Activated B cell treated with CpG ODN at 0.5 μM for 24 hours (primary cell): ENCODE measurements at regions of chr3 and their contacts with region 1.

Region 1: DNA sequence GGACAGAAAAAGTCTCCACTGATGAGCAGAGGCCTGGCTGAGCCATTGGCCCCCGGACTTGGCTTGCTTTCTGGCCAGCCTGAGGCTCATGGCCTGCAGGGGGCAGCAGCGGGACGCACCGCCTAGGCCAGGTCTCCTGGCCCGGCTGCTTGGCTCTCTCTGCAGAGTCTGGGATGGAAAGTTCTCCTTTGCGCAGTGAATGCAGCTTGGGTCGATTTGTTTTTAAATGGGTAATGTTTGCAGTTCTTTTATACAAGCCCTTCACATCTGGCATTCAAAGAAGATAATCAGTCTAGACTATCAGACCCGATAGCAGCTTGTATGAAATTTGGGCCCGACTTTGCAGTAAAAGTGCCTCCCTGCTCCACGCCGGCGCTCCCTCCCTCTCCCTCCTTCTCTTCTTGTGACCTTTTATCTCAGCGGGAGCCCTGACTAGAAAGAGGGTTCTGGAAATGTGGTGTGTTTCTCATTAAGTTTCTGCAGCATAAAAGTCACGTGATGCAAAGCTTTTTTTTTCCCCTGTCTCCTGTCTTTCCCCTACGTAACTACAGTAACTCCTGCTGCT is 59.9 kb downstream of the ZNF621 start:
- DNase-seq: peak; percentile 78
- ATAC-seq: peak; percentile 86
- H3K4me3 Mint-ChIP-seq: no peak overlapping the region
- H3K27ac Mint-ChIP-seq: no peak overlapping the region
- H3K4me1 Mint-ChIP-seq: peaks cover 5% of the 10 kb centered on the region
- H3K27me3 Mint-ChIP-seq: peaks cover 15% of the 10 kb centered on the region
- CTCF ChIP-seq: peak; percentile 91

Region 2: DNA sequence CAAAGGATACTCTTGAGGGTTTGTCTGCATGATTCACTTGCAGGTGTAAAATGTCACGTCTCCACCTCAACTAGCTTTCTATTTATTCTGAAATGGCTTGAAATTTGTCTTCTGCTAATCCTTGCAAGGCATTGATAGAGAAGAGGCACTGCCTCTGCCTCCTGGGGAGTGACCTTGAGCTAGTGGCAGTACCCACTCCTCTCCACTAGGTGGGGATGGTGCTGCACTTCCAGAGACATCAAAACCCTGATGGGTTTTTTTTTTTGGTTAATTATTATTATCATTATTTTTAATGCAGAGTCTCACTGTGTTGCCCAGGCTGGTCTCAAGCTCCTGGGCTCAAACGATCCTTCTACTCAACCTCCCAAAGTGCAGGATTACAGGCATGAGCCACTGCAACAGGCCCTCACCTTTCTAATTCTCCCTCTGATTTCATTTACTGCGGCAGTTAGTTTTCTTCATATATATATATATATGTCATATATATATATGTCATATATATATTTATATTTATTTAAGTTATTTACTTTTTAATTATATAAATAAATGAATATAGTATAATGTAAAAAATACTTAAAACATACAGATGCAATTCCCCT is 392.8 kb before region 1 on chr3:
- CTCF ChIA-PET with region 1: interaction called, 6 read pairs
- POLR2A ChIA-PET with region 1: no interaction called
- intact Hi-C with region 1: loop called (anchors 5 kb)
- DNase-seq: peak; percentile 26
- ATAC-seq: peak; percentile 82
- H3K4me3 Mint-ChIP-seq: no peak overlapping the region
- H3K27ac Mint-ChIP-seq: no peak overlapping the region
- H3K4me1 Mint-ChIP-seq: no peaks in the 10 kb centered on the region
- H3K27me3 Mint-ChIP-seq: no peaks in the 10 kb centered on the region
- CTCF ChIP-seq: peak; percentile 60

Region 3: DNA sequence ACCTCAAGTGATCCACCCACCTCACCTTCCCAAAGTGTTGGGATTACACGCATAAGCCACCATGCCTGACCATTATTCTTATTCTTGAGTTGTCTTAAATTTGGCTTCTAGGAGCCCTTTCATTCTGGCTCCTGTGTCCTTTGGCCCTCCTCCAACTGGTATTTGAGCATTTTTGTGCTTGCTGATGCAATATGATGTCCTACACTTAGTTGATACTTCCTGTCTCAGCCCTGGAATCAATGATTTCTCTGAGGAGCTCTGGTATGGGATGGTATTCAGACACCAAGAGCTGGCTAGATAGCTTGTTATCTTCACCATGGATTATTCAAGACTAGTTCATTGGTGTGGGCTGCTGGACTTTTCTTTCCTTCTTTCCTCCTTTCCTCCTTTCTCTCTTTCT is 34.5 kb before region 1 on chr3:
- CTCF ChIA-PET with region 1: no interaction called
- POLR2A ChIA-PET with region 1: no interaction called
- intact Hi-C with region 1: no loop called
- DNase-seq: no peak
- ATAC-seq: no peak
- H3K4me3 Mint-ChIP-seq: no peak overlapping the region
- H3K27ac Mint-ChIP-seq: no peak overlapping the region
- H3K4me1 Mint-ChIP-seq: no peaks in the 10 kb centered on the region
- H3K27me3 Mint-ChIP-seq: no peaks in the 10 kb centered on the region
- CTCF ChIP-seq: no peak

Region 4: GRCh38 chr3:40672861-40673260 is 88.2 kb after region 1 on chr3:
- CTCF ChIA-PET with region 1: no interaction called
- POLR2A ChIA-PET with region 1: no interaction called
- intact Hi-C with region 1: loop called (anchors 2 kb)
- DNase-seq: no peak
- ATAC-seq: no peak
- H3K4me3 Mint-ChIP-seq: no peak overlapping the region
- H3K27ac Mint-ChIP-seq: no peak overlapping the region
- H3K4me1 Mint-ChIP-seq: peaks cover 15% of the 10 kb centered on the region
- H3K27me3 Mint-ChIP-seq: no peaks in the 10 kb centered on the region
- CTCF ChIP-seq: no peak

Region 5: GRCh38 chr3:40754994-40755393 is 170.3 kb after region 1 on chr3:
- CTCF ChIA-PET with region 1: no interaction called
- POLR2A ChIA-PET with region 1: no interaction called
- intact Hi-C with region 1: no loop called
- DNase-seq: no peak
- ATAC-seq: no peak
- H3K4me3 Mint-ChIP-seq: no peak overlapping the region
- H3K27ac Mint-ChIP-seq: no peak overlapping the region
- H3K4me1 Mint-ChIP-seq: no peaks in the 10 kb centered on the region
- H3K27me3 Mint-ChIP-seq: peaks cover 12% of the 10 kb centered on the region
- CTCF ChIP-seq: no peak

Region 6: GRCh38 chr3:40971191-40972168 is 386.8 kb after region 1 on chr3:
- CTCF ChIA-PET with region 1: interaction called, 28 read pairs
- POLR2A ChIA-PET with region 1: interaction called, 10 read pairs
- intact Hi-C with region 1: loop called (anchors 1 kb)
- DNase-seq: peak; percentile 38
- ATAC-seq: peak; percentile 80
- H3K4me3 Mint-ChIP-seq: peak overlapping the region; percentile 60
- H3K27ac Mint-ChIP-seq: peak overlapping the region; percentile 98
- H3K4me1 Mint-ChIP-seq: peaks cover 78% of the 10 kb centered on the region
- H3K27me3 Mint-ChIP-seq: no peaks in the 10 kb centered on the region
- CTCF ChIP-seq: no peak

Region 7: GRCh38 chr3:41198950-41199865 is 614.5 kb after region 1 on chr3 and contains the start of gene CTNNB1:
- CTCF ChIA-PET with region 1: interaction called, 4 read pairs
- POLR2A ChIA-PET with region 1: no interaction called
- intact Hi-C with region 1: loop called (anchors 1 kb)
- DNase-seq: peak; percentile 91
- ATAC-seq: peak; percentile 80
- H3K4me3 Mint-ChIP-seq: peak within 1 kb of the TSS; percentile 94
- H3K27ac Mint-ChIP-seq: peak within 1 kb of the TSS; percentile 96
- H3K4me1 Mint-ChIP-seq: peaks cover 40% of the 10 kb centered on the region
- H3K27me3 Mint-ChIP-seq: peaks cover 4% of the 10 kb centered on the region
- CTCF ChIP-seq: no peak
- total RNA-seq, gene CTNNB1: 155 and 164 TPM in 2 replicates

Region 8: DNA sequence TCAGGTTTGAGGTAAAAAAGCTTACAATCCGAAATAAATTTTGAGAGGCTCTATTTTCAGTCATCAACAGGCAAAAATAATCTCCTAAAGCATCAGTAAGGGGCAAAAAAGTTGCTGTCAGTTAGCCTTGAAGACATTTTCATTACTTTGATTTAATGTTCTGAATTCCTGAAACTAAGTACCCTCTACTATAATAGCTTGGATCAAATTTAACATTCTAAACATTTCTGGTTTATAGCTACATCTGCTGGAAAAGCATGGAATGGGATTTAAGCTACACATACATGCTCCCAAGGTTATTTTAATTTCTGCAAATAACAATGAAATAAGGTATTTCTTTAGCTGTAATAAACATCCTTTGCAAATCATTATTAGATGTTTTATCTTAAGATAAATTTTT is 1131.8 kb after region 1 on chr3:
- CTCF ChIA-PET with region 1: no interaction called
- POLR2A ChIA-PET with region 1: no interaction called
- intact Hi-C with region 1: loop called (anchors 5 kb)
- DNase-seq: no peak
- ATAC-seq: no peak
- H3K4me3 Mint-ChIP-seq: no peak overlapping the region
- H3K27ac Mint-ChIP-seq: no peak overlapping the region
- H3K4me1 Mint-ChIP-seq: no peaks in the 10 kb centered on the region
- H3K27me3 Mint-ChIP-seq: no peaks in the 10 kb centered on the region
- CTCF ChIP-seq: no peak

Region 9: GRCh38 chr3:42443819-42444436 is 1859.2 kb after region 1 on chr3:
- CTCF ChIA-PET with region 1: interaction called, 5 read pairs
- POLR2A ChIA-PET with region 1: no interaction called
- intact Hi-C with region 1: loop called (anchors 5 kb)
- DNase-seq: peak; percentile 64
- ATAC-seq: peak; percentile 79
- H3K4me3 Mint-ChIP-seq: no peak overlapping the region
- H3K27ac Mint-ChIP-seq: no peak overlapping the region
- H3K4me1 Mint-ChIP-seq: no peaks in the 10 kb centered on the region
- H3K27me3 Mint-ChIP-seq: peaks cover 12% of the 10 kb centered on the region
- CTCF ChIP-seq: peak; percentile 54